ENCODE measurements at regions of chr14 and their contacts with region 1.

Region 1: GRCh38 chr14:102063091-102063802 is 23.6 kb downstream of the HSP90AA1 start:
- DNase-seq: peak; percentile 58 to 74
- ATAC-seq: peak; percentile 88 to 94
- H3K4me3 ChIP-seq: no peak overlapping the region
- H3K27ac ChIP-seq: no peak overlapping the region
- H3K4me1 ChIP-seq: peaks cover 0 to 8% of the 10 kb centered on the region in 2 donors
- H3K27me3 ChIP-seq: no peaks in the 10 kb centered on the region
- CTCF ChIP-seq: peak in 3 of 5 experiments; percentile 23 to 45 (median 43)
- POLR2A ChIP-seq: no peak

Region 2: DNA sequence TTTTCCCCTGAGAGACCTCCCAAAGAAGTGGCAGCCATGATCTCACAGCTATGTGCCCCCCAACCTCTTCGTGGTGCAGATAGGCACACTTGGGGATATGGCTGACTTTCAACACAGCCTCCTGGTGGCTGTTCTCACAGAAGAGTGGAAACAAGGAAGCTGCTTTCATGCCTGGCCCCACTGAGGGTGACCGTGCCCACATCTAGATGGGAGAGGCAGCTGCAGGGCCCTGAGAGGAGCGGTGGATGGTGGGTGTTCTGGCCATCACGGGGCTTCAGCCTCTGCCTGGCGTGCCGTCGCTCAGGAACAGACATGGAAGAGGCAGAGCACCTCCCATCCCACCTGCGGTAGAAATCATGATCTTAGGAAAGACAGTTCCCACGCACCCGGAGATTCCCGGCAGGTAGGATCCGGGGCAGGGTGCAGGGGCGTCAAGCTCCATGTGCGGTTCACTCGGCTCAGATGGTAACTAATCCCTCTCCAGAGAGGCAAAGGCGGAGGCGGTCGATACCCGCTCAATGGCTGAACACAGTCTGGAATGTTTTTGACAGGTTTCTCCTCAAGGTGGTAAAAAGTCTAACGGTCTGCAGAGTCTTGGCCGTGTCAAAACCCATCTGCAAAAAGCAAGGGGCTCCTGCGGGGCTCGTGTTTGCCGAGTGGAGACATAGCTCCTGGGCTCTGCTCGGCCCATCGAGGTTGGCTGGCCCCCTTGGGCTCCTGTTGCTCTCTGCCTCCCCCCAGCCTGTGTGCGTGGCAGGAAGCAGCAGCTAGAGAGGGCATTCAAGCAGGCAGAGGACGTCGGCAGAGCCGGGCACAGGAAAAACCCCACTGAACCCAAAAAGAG is 934.5 kb before region 1 on chr14:
- in situ Hi-C with region 1: no loop called
- intact Hi-C with region 1: no loop called
- DNase-seq: no peak
- ATAC-seq: no peak
- H3K4me3 ChIP-seq: no peak overlapping the region
- H3K27ac ChIP-seq: no peak overlapping the region
- H3K4me1 ChIP-seq: no peaks in the 10 kb centered on the region
- H3K27me3 ChIP-seq: peaks cover 0 to 5% (median 0%) of the 10 kb centered on the region in 3 donors
- CTCF ChIP-seq: no peak
- POLR2A ChIP-seq: no peak

Region 3: GRCh38 chr14:102096214-102097114 is 33.2 kb after region 1 on chr14:
- in situ Hi-C with region 1: loop called in 1 of 4 experiments (anchors 5 kb)
- intact Hi-C with region 1: loop called (anchors 2 kb)
- DNase-seq: peak; percentile 72 to 75
- ATAC-seq: peak; percentile 89
- H3K4me3 ChIP-seq: no peak overlapping the region
- H3K27ac ChIP-seq: peak overlapping the region in 1 of 4 donors; percentile 16
- H3K4me1 ChIP-seq: peaks cover 7% of the 10 kb centered on the region in 2 donors
- H3K27me3 ChIP-seq: no peaks in the 10 kb centered on the region
- CTCF ChIP-seq: peak; percentile 73 to 87 (median 77)
- POLR2A ChIP-seq: no peak

Measured in gastrocnemius medialis (tissue), 4 donors.